B cell (primary cell): ENCODE measurements at regions of chr1 and their contacts with region 1.

Region 1: DNA sequence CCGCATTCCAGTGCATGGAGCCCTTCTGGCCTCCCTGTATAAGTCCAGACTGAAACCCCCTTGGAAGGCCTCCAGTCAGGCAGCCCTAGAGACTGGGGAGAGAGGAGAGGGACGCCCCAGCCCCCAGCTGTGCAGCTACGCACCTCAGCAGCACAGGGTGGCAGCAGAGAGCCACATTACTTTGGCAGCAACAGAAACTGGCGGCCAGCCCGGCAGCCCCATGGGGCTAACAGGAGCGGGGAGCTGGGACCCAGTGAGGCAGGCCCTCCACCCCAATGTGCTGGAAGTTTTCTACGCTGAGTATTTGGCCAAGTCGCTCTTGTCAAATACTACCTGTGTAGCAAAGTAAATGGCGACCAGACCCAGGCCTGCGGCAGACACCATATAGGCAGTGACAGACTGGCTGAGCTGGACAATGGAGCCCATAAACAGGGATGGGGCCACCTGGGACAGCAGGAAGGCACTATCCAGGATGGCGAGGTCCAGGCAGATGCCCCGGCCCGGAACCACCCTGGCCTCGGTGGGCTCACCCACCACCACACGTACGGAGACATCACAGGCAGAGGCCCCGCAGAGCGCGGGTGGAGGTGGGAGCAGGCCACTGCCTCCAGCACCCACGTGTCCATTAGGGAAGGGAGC is 21.2 kb downstream of the SLC45A3 start:
- DNase-seq: peak; percentile 87
- ATAC-seq: peak; percentile 93
- H3K4me3 ChIP-seq: no peak overlapping the region
- H3K4me3 Mint-ChIP-seq: peak overlapping the region; percentile 10
- H3K27ac ChIP-seq: peak overlapping the region in 1 of 2 donors; percentile 72
- H3K27ac Mint-ChIP-seq: peak overlapping the region; percentile 32
- H3K4me1 ChIP-seq: peaks cover 18 to 25% of the 10 kb centered on the region in 2 donors
- H3K4me1 Mint-ChIP-seq: peaks cover 22% of the 10 kb centered on the region
- H3K27me3 ChIP-seq: no peaks in the 10 kb centered on the region
- H3K27me3 Mint-ChIP-seq: no peaks in the 10 kb centered on the region
- CTCF ChIP-seq: peak; percentile 89

Region 2: GRCh38 chr1:204487256-204487615 is 1171.8 kb before region 1 on chr1:
- CTCF ChIA-PET with region 1: no interaction called
- POLR2A ChIA-PET with region 1: no interaction called
- intact Hi-C with region 1: no loop called
- DNase-seq: no peak
- ATAC-seq: no peak
- H3K4me3 ChIP-seq: no peak overlapping the region
- H3K4me3 Mint-ChIP-seq: no peak overlapping the region
- H3K27ac ChIP-seq: peak overlapping the region in 1 of 2 donors; percentile 60
- H3K27ac Mint-ChIP-seq: peak overlapping the region; percentile 71
- H3K4me1 ChIP-seq: peaks cover 75 to 76% of the 10 kb centered on the region in 2 donors
- H3K4me1 Mint-ChIP-seq: peaks cover 75% of the 10 kb centered on the region
- H3K27me3 ChIP-seq: no peaks in the 10 kb centered on the region
- H3K27me3 Mint-ChIP-seq: no peaks in the 10 kb centered on the region
- CTCF ChIP-seq: no peak

Region 3: GRCh38 chr1:205430696-205431305 is 228.3 kb before region 1 on chr1:
- CTCF ChIA-PET with region 1: no interaction called
- POLR2A ChIA-PET with region 1: no interaction called
- intact Hi-C with region 1: no loop called
- DNase-seq: peak; percentile 88
- ATAC-seq: peak; percentile 91
- H3K4me3 ChIP-seq: peak overlapping the region; percentile 23 to 54 (median 46)
- H3K4me3 Mint-ChIP-seq: peak overlapping the region; percentile 80
- H3K27ac ChIP-seq: peak overlapping the region; percentile 4 to 43
- H3K27ac Mint-ChIP-seq: peak overlapping the region; percentile 70
- H3K4me1 ChIP-seq: peaks cover 25 to 33% of the 10 kb centered on the region in 2 donors
- H3K4me1 Mint-ChIP-seq: peaks cover 39% of the 10 kb centered on the region
- H3K27me3 ChIP-seq: no peaks in the 10 kb centered on the region
- H3K27me3 Mint-ChIP-seq: no peaks in the 10 kb centered on the region
- CTCF ChIP-seq: peak; percentile 70

Region 4: GRCh38 chr1:205528887-205529825 is 129.9 kb before region 1 on chr1:
- CTCF ChIA-PET with region 1: interaction called, 278 read pairs
- POLR2A ChIA-PET with region 1: no interaction called
- intact Hi-C with region 1: no loop called
- DNase-seq: peak; percentile 86
- ATAC-seq: peak; percentile 85
- H3K4me3 ChIP-seq: peak overlapping the region in 4 of 5 experiments; percentile 25 to 60 (median 38)
- H3K4me3 Mint-ChIP-seq: peak overlapping the region; percentile 79
- H3K27ac ChIP-seq: no peak overlapping the region
- H3K27ac Mint-ChIP-seq: peak overlapping the region; percentile 26
- H3K4me1 ChIP-seq: peaks cover 4 to 10% of the 10 kb centered on the region in 2 donors
- H3K4me1 Mint-ChIP-seq: peaks cover 7% of the 10 kb centered on the region
- H3K27me3 ChIP-seq: peaks cover 0 to 2% (median 0%) of the 10 kb centered on the region in 4 experiments
- H3K27me3 Mint-ChIP-seq: peaks cover 4% of the 10 kb centered on the region
- CTCF ChIP-seq: peak; percentile 97

Region 5: DNA sequence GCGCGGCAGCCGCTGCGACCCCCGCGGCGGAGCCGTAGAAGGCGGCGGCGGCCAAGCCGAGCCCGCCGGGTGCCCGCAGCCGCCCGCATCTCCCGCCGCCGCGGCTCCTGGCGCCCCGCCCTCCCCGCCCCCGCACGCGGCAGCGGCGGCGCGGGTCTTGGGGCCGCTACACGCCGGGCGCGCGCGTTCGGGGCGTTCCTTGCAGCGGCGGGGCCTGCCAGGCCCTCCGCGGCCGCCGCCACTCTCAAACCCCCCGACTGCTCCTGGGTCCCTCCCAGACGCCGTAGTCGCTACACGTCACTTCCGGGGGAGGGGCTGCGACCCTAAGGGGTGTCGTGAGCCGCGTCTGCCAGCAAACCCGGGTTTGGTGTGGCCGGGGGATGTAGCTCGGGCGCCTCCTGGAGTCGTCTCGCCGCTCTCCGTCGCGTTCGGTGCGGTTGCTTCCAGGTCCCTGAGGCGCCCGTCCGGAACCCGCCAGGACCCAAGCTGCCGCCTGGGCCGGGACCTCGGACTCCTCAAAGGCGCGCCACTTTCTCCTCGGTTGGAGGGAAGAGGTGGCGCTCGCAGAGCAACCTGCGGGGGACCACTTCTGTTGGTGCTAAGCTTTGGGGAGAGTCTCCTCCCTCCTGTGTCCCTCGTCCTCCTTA is 27.2 kb before region 1 on chr1 and contains the start of gene ELK4:
- CTCF ChIA-PET with region 1: interaction called, 118 read pairs
- POLR2A ChIA-PET with region 1: interaction called, 4 read pairs
- intact Hi-C with region 1: loop called (anchors 1 kb)
- DNase-seq: peak; percentile 99
- ATAC-seq: peak; percentile 81
- H3K4me3 ChIP-seq: peak within 1 kb of the TSS; percentile 57 to 94 (median 72)
- H3K4me3 Mint-ChIP-seq: peak within 1 kb of the TSS; percentile 94
- H3K27ac ChIP-seq: peak within 1 kb of the TSS; percentile 85 to 93
- H3K27ac Mint-ChIP-seq: peak within 1 kb of the TSS; percentile 96
- H3K4me1 ChIP-seq: peaks cover 33 to 41% of the 10 kb centered on the region in 2 donors
- H3K4me1 Mint-ChIP-seq: peaks cover 44% of the 10 kb centered on the region
- H3K27me3 ChIP-seq: no peaks in the 10 kb centered on the region
- H3K27me3 Mint-ChIP-seq: no peaks in the 10 kb centered on the region
- CTCF ChIP-seq: peak; percentile 80
- total RNA-seq, gene ELK4: 143 and 151 TPM in 2 replicates

Region 6: DNA sequence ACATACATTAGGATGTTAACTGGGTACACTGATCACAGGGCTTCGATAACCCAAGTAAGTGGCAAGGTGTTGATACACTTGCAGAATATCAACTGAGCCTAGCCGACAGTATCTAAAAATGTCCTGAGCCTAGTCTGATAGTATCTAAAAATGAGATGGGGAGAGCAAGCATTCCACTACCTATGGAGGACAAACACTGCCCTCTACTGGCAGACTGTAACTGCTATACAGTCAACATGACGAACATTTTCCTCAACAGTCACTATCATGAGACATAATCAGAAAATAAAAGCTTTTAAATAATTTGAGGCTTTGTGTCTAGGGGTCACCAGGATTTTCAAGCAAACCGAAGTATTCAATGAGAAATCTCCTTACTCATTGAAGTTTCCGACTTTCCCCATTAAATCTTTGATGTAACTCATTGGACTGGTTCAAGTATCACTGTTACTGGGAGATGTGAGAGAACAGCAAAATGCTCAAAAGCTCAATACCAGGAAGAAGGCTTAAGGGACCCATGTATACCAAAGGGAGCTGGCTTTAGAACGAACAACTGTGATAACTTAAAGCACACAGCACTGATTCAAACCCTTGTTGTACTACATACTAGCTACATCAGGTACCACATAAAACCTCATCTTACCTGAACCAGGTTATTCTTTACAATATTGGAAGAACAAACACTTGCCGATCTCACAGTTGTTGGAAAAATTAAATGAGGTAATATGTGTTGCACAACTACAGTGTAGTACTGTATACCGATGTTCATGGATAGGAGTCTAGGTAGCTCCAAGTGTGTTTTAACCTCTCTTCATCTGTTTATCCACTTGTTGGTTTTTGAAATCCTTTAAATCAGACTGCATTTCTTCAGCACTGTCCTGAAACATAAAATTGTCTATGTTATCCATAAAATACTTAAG is 52.3 kb after region 1 on chr1:
- CTCF ChIA-PET with region 1: interaction called, 943 read pairs
- POLR2A ChIA-PET with region 1: interaction called, 3 read pairs
- intact Hi-C with region 1: loop called (anchors 1 kb)
- DNase-seq: peak; percentile 87
- ATAC-seq: peak; percentile 96
- H3K4me3 ChIP-seq: no peak overlapping the region
- H3K4me3 Mint-ChIP-seq: no peak overlapping the region
- H3K27ac ChIP-seq: no peak overlapping the region
- H3K27ac Mint-ChIP-seq: peak overlapping the region; percentile 39
- H3K4me1 ChIP-seq: peaks cover 13 to 16% of the 10 kb centered on the region in 2 donors
- H3K4me1 Mint-ChIP-seq: peaks cover 22% of the 10 kb centered on the region
- H3K27me3 ChIP-seq: no peaks in the 10 kb centered on the region
- H3K27me3 Mint-ChIP-seq: no peaks in the 10 kb centered on the region
- CTCF ChIP-seq: peak; percentile 95

Region 7: DNA sequence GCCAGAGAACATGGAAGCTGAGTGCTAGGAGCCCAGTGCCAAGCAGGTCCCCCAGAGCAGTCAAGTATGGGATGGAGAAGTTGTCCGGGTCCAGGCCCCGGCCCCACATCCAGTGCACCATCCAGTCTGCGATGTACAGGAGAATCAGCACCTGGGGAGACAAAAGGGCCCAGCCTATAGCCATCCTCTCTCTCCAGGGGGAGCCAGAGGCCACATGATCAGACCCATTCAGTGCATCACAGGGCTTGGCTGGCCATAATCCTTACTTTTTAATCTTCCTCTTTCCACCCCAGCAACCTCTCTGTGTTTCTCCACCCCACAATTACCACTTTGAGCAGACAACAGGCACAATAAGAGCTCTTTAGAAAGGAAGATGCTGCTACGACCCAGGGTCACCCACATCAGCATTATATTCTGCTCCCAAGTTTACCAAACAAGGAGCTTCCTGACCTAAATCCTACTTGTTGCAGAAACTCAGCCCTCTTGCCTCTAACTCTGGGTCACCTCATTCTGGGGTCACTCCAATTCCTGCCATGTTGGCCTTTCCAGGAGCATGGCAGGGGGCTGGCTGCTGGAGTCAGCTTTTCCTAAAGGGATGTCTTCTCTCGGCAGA is 132.6 kb after region 1 on chr1:
- CTCF ChIA-PET with region 1: interaction called, 33 read pairs
- POLR2A ChIA-PET with region 1: no interaction called
- intact Hi-C with region 1: loop called (anchors 2 kb)
- DNase-seq: peak; percentile 74
- ATAC-seq: peak; percentile 82
- H3K4me3 ChIP-seq: no peak overlapping the region
- H3K4me3 Mint-ChIP-seq: no peak overlapping the region
- H3K27ac ChIP-seq: no peak overlapping the region
- H3K27ac Mint-ChIP-seq: peak overlapping the region; percentile 42
- H3K4me1 ChIP-seq: peaks cover 5 to 27% of the 10 kb centered on the region in 2 donors
- H3K4me1 Mint-ChIP-seq: peaks cover 27% of the 10 kb centered on the region
- H3K27me3 ChIP-seq: no peaks in the 10 kb centered on the region
- H3K27me3 Mint-ChIP-seq: no peaks in the 10 kb centered on the region
- CTCF ChIP-seq: peak; percentile 82